Activated CD4-positive, alpha-beta T cell treated with anti-CD3 and anti-CD28 coated beads for 36 hours (primary cell): ENCODE measurements at regions of chr15 and their contacts with region 1.

Region 1: DNA sequence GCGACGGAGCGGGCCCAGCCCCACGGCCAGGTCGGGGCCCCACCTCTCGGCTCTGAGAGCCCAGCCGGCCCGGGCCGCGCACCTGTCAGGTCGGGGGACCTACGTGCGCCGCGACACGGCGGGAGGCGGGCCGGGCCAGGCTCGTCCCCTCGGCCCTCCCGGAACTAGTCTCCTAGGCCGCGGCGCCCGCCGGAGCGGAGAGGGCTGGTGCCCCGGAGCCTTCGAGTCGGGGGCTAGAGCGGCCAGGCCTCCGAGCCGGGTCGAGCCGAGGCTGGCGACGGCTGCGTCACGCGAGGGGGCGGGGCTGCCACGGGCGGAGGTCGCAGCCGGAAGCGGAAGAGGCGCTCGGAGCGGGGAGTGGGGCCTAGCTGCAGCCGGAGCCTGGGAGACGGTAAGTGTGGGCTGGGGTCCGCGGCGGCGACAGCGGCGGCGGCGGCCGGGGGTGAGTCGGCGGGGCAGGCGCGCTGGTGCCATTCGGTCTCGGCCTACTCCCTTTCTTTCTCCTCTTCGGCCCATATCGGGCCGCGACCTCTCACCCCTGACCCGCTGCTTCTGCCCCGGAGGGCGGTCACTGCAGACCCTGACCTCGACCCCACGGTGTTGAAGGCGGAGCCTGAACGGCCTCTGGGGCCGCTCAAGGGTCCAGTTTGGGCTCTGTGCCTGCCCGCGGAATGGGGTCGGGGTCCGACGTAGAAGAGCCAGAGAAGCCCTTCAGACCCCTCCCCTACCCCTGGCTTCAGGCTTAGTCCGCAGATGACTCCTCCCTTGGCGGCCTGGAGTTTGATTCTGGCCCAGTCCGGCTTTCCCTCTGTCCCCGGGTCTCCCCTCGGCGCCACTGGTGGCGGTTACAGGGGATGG is at the start of gene CLK3:
- DNase-seq: peak; percentile 99
- ATAC-seq: peak; percentile 90
- H3K4me3 Mint-ChIP-seq: peak within 1 kb of the TSS; percentile 93
- H3K27ac Mint-ChIP-seq: peak within 1 kb of the TSS; percentile 95
- H3K4me1 Mint-ChIP-seq: peaks cover 42% of the 10 kb centered on the region
- H3K27me3 Mint-ChIP-seq: no peaks in the 10 kb centered on the region
- total RNA-seq, gene CLK3: 130 to 175 TPM

Region 2: GRCh38 chr15:73991726-73992593 is 623.8 kb before region 1 on chr15 and contains the start of gene STOML1:
- CTCF ChIA-PET with region 1: interaction called, 3 read pairs
- POLR2A ChIA-PET with region 1: no interaction called
- intact Hi-C with region 1: loop called (anchors 1 to 2 kb)
- DNase-seq: peak; percentile 96
- ATAC-seq: peak; percentile 74
- H3K4me3 Mint-ChIP-seq: peak within 1 kb of the TSS; percentile 74
- H3K27ac Mint-ChIP-seq: peak within 1 kb of the TSS; percentile 86
- H3K4me1 Mint-ChIP-seq: peaks cover 42% of the 10 kb centered on the region
- H3K27me3 Mint-ChIP-seq: no peaks in the 10 kb centered on the region
- total RNA-seq, gene STOML1: 6.3 to 7.1 TPM

Region 3: GRCh38 chr15:74460871-74461846 is 154.6 kb before region 1 on chr15 and contains the start of gene UBL7:
- CTCF ChIA-PET with region 1: interaction called, 13 read pairs
- POLR2A ChIA-PET with region 1: no interaction called
- intact Hi-C with region 1: loop called (anchors 1 kb)
- DNase-seq: peak; percentile 99
- ATAC-seq: peak; percentile 97
- H3K4me3 Mint-ChIP-seq: peak within 1 kb of the TSS; percentile 96
- H3K27ac Mint-ChIP-seq: peak within 1 kb of the TSS; percentile 97
- H3K4me1 Mint-ChIP-seq: peaks cover 47% of the 10 kb centered on the region
- H3K27me3 Mint-ChIP-seq: no peaks in the 10 kb centered on the region
- total RNA-seq, gene UBL7: 47.5 to 48.6 TPM

Region 4: GRCh38 chr15:74598126-74598842 is 17.5 kb before region 1 on chr15:
- CTCF ChIA-PET with region 1: interaction called, 7 read pairs
- POLR2A ChIA-PET with region 1: interaction called, 13 read pairs
- intact Hi-C with region 1: loop called (anchors 1 kb)
- DNase-seq: peak; percentile 94
- ATAC-seq: peak; percentile 99
- H3K4me3 Mint-ChIP-seq: peak overlapping the region; percentile 90
- H3K27ac Mint-ChIP-seq: peak overlapping the region; percentile 99
- H3K4me1 Mint-ChIP-seq: peaks cover 20% of the 10 kb centered on the region
- H3K27me3 Mint-ChIP-seq: no peaks in the 10 kb centered on the region

Region 5: DNA sequence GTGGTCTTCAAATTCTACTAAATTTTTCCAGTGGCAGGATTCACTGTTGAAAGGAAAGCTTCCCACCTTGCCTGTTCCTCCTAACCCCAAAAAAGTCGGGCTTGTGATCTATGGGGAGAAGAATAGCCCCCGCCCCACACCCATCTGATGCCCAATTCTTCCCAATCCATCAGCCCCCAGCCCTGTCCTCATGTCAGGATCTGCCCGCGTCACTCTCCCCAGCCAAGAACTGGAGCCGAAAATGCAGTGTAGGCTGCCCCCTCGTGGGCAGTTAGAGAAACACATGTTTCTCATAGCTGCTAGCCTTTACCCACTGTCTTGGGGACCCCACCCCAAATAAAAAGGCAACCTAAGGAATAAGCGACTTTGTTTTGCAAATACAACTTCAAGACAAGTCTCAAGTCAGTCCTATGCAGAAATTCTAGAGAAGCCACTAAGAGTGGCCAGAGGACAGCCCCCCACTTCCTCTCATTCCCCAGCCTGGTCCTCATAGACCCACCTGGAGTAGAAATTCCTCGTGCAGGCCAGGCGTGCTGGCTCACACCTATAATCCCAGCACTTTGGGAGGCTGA is 153.1 kb after region 1 on chr15:
- CTCF ChIA-PET with region 1: interaction called, 59 read pairs
- POLR2A ChIA-PET with region 1: no interaction called
- intact Hi-C with region 1: no loop called
- DNase-seq: peak; percentile 83
- ATAC-seq: peak; percentile 45
- H3K4me3 Mint-ChIP-seq: no peak overlapping the region
- H3K27ac Mint-ChIP-seq: no peak overlapping the region
- H3K4me1 Mint-ChIP-seq: peaks cover 20% of the 10 kb centered on the region
- H3K27me3 Mint-ChIP-seq: peaks cover 2% of the 10 kb centered on the region

Region 6: DNA sequence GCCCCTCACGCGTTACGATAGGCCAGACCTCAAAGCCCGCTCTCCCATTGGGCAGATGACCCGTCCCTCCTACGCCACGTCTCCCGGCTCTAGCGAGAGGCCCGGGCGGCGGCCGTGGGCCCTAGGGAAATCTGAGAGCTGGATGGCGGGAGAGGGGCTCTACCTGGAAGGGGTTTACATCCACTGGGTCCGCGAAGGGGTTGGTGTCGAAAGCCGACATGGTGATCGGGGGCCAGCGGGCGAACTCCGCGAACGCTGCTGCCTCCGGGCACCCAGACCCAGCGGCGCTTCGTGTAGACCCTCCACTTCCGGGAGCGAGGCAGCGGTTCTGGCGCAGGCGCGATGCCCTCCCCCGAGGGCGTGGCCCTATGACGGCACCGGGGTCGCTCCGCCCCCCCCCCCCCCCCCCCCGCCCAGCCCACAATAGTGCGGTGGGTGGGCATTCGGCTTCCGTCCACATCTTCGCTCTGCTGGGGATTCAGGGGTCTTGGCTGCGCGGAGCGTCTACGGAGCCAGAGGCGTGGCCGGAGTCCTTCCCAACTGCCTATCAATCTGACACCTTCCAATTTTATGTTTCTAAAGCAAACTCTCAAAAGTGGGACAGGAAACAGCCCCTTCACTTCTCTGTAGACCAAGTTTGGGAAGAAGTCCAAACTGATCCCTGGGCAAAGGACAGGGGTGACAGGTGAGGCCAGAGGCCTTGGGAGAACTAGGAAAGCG is 257.5 kb after region 1 on chr15 and contains the start of gene SCAMP2:
- CTCF ChIA-PET with region 1: no interaction called
- POLR2A ChIA-PET with region 1: no interaction called
- intact Hi-C with region 1: loop called in 1 of 2 experiments (anchors 1 kb)
- DNase-seq: peak; percentile 94
- ATAC-seq: peak; percentile 84
- H3K4me3 Mint-ChIP-seq: peak within 1 kb of the TSS; percentile 87
- H3K27ac Mint-ChIP-seq: peak within 1 kb of the TSS; percentile 87
- H3K4me1 Mint-ChIP-seq: peaks cover 48% of the 10 kb centered on the region
- H3K27me3 Mint-ChIP-seq: no peaks in the 10 kb centered on the region
- total RNA-seq, gene SCAMP2: 61.6 to 83.4 TPM

Region 7: DNA sequence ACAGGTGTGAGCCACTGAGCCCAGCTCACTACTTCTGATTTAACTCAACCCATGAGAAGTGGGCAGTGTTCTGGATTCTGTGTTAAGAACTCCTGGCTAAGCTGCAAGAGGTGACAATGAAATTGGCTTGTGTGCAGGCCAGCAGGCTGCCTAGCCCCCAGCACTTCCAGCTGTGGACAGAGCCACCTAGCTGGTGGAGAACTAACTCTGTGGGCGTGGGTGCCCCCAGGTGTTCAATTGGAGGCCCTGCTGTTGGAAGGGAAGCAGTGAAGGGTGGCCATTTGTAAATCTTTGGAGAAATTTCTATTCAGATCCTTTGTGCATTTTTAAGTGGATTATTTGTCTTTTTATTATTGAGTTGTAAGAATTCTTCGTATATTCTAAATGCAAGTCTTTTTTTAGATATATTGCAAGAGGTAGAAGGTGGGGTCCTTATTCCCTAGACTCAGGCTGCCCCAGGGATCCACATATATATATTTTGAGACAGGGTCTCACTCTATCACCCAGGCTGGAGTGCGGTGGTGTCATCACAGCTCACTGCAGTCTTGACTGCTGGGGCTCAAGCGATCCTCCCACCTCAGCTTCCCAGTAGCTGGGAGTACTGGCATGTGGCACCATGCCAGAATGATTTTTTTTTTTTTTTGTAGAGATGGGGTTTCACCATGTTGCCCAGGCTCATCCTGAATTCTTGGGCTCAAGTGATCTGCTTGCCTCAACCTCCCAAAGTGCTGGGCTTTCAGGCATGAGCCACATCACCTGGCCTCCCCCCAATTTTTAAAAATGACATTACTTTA is 372.5 kb after region 1 on chr15:
- CTCF ChIA-PET with region 1: no interaction called
- POLR2A ChIA-PET with region 1: no interaction called
- intact Hi-C with region 1: no loop called
- DNase-seq: peak; percentile 76
- ATAC-seq: peak; percentile 57
- H3K4me3 Mint-ChIP-seq: no peak overlapping the region
- H3K27ac Mint-ChIP-seq: no peak overlapping the region
- H3K4me1 Mint-ChIP-seq: peaks cover 16% of the 10 kb centered on the region
- H3K27me3 Mint-ChIP-seq: peaks cover 13% of the 10 kb centered on the region

Region 8: GRCh38 chr15:75023181-75023871 is 407.6 kb after region 1 on chr15 and contains the start of gene PPCDC:
- CTCF ChIA-PET with region 1: interaction called, 5 read pairs
- POLR2A ChIA-PET with region 1: no interaction called
- intact Hi-C with region 1: loop called in 1 of 2 experiments (anchors 1 kb)
- DNase-seq: peak; percentile 97
- ATAC-seq: peak; percentile 100
- H3K4me3 Mint-ChIP-seq: peak within 1 kb of the TSS; percentile 89
- H3K27ac Mint-ChIP-seq: peak within 1 kb of the TSS; percentile 95
- H3K4me1 Mint-ChIP-seq: peaks cover 13% of the 10 kb centered on the region
- H3K27me3 Mint-ChIP-seq: no peaks in the 10 kb centered on the region
- total RNA-seq, gene PPCDC: 23.3 to 24.0 TPM